Head of caudate nucleus (tissue), 42 donors: ENCODE measurements at regions of chr10 and their contacts with region 1.

Region 1: GRCh38 chr10:615583-616152 is 73.8 kb downstream of the DIP2C start:
- DNase-seq: peak in 17 of 42 donors; percentile 36 to 82 (median 62)

Region 2: GRCh38 chr10:516766-517165 is 98.9 kb before region 1 on chr10:
- intact Hi-C with region 1: loop called (anchors 5 kb)
- DNase-seq: peak in 5 of 42 donors; percentile 15 to 29 (median 19)